ENCODE measurements at regions of chr16 and their contacts with region 1.

Region 1: GRCh38 chr16:79628501-79628975 is 28.0 kb upstream of the MAF start:
- DNase-seq: peak; percentile 91
- H3K4me3 Mint-ChIP-seq: no peak overlapping the region
- H3K27ac Mint-ChIP-seq: peak overlapping the region; percentile 76
- H3K4me1 Mint-ChIP-seq: peaks cover 41% of the 10 kb centered on the region
- H3K27me3 Mint-ChIP-seq: peaks cover 30% of the 10 kb centered on the region

Region 2: DNA sequence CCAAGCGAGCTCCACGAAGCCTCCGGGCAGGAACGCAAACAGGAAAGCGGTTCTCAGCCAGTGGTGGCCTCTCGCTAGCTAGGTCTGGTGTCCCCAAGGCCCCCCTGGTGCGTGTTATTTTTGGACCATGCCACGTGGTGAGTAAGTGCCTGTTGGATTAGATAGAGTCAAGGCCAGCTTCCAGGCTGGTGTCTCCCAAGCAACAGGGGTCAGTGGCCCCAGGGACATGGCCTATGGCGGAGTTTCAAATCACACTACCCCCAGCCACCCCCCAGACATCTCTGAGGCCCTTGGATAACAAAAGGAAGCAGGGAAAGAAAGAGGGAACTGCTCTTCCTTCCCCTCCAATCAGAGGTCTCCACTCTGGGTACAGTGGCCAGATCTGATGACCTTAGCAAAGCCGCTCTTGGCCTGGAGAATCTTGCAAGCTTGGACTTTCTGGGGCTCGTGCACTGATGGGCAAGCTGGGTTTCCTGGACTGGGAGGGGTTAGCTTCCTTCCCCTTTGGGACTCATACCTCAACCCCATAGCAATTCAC is 86.2 kb before region 1 on chr16:
- CTCF ChIA-PET with region 1: no interaction called
- POLR2A ChIA-PET with region 1: no interaction called
- intact Hi-C with region 1: no loop called
- DNase-seq: no peak
- H3K4me3 Mint-ChIP-seq: no peak overlapping the region
- H3K27ac Mint-ChIP-seq: no peak overlapping the region
- H3K4me1 Mint-ChIP-seq: no peaks in the 10 kb centered on the region
- H3K27me3 Mint-ChIP-seq: no peaks in the 10 kb centered on the region

Region 3: GRCh38 chr16:79613009-79613408 is 15.5 kb before region 1 on chr16:
- CTCF ChIA-PET with region 1: interaction called, 4 read pairs
- POLR2A ChIA-PET with region 1: interaction called, 15 read pairs
- intact Hi-C with region 1: loop called (anchors 1 kb)
- DNase-seq: no peak
- H3K4me3 Mint-ChIP-seq: no peak overlapping the region
- H3K27ac Mint-ChIP-seq: peak overlapping the region; percentile 76
- H3K4me1 Mint-ChIP-seq: peaks cover 63% of the 10 kb centered on the region
- H3K27me3 Mint-ChIP-seq: peaks cover 16% of the 10 kb centered on the region

Region 4: DNA sequence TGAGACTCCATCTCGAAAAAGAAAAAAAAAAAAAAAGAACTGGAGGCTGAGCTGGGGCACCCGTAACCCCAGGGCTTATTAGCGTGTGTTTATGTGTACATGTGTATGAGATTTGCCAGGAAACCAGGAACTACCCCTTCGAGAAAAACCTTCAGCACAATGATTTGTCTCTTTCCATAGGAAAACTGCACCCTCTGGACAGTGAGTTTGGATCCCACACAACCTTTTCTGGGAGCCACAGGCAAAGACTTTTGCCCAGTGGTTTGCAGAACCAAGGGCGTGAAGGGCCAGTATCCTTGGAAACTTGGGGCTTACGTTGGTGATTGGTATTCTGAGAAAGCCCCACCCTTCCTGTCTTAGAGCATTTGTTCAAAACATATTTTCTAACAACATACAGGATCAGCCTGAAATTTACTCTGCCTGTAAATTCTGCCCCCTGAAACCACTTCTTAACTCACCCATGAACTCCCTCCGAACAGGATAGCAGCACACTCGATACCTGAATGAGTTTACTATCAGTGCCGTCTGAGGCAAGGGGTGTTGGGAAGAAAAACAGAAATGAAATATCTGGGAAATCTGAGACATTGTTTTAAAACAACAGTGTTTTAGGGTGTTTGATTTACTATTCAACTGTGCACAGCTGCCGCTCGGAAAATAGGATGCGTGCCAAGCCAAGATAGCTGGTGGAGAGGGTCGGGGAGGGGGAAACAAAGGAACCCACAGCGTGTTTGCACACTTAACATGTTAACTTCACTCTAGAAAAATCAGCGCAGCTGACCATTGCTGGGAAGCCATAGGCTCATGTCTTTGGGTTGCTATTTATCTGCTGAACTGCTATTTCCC is 12.2 kb after region 1 on chr16:
- CTCF ChIA-PET with region 1: no interaction called
- POLR2A ChIA-PET with region 1: interaction called, 9 read pairs
- intact Hi-C with region 1: loop called (anchors 1 kb)
- DNase-seq: no peak
- H3K4me3 Mint-ChIP-seq: no peak overlapping the region
- H3K27ac Mint-ChIP-seq: peak overlapping the region; percentile 50
- H3K4me1 Mint-ChIP-seq: peaks cover 39% of the 10 kb centered on the region
- H3K27me3 Mint-ChIP-seq: no peaks in the 10 kb centered on the region

Region 5: DNA sequence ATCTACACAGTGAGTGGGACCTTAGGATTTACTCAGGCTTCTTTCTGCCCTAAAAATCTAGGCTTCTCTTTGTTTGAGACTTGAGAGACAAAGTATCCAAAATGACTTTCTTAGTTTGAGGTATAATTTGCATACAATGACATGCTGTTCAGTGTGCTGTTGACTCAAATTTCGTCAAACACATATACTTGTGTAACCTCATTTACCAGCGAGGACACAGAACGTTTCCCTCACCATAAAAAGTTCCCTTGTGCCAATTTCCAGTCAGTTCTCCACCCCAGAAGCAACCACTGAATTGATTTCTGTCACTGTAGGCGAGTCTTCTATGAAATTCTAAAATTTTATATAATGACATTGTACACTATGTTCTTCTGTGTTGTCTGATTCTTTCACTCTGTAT is 40.0 kb after region 1 on chr16:
- CTCF ChIA-PET with region 1: no interaction called
- POLR2A ChIA-PET with region 1: no interaction called
- intact Hi-C with region 1: loop called (anchors 1 kb)
- DNase-seq: peak; percentile 61
- H3K4me3 Mint-ChIP-seq: no peak overlapping the region
- H3K27ac Mint-ChIP-seq: no peak overlapping the region
- H3K4me1 Mint-ChIP-seq: peaks cover 15% of the 10 kb centered on the region
- H3K27me3 Mint-ChIP-seq: peaks cover 5% of the 10 kb centered on the region

Region 6: GRCh38 chr16:79758615-79759341 is 130.2 kb after region 1 on chr16:
- CTCF ChIA-PET with region 1: no interaction called
- POLR2A ChIA-PET with region 1: no interaction called
- intact Hi-C with region 1: loop called (anchors 1 kb)
- DNase-seq: no peak
- H3K4me3 Mint-ChIP-seq: no peak overlapping the region
- H3K27ac Mint-ChIP-seq: no peak overlapping the region
- H3K4me1 Mint-ChIP-seq: peaks cover 37% of the 10 kb centered on the region
- H3K27me3 Mint-ChIP-seq: peaks cover 4% of the 10 kb centered on the region

Region 7: DNA sequence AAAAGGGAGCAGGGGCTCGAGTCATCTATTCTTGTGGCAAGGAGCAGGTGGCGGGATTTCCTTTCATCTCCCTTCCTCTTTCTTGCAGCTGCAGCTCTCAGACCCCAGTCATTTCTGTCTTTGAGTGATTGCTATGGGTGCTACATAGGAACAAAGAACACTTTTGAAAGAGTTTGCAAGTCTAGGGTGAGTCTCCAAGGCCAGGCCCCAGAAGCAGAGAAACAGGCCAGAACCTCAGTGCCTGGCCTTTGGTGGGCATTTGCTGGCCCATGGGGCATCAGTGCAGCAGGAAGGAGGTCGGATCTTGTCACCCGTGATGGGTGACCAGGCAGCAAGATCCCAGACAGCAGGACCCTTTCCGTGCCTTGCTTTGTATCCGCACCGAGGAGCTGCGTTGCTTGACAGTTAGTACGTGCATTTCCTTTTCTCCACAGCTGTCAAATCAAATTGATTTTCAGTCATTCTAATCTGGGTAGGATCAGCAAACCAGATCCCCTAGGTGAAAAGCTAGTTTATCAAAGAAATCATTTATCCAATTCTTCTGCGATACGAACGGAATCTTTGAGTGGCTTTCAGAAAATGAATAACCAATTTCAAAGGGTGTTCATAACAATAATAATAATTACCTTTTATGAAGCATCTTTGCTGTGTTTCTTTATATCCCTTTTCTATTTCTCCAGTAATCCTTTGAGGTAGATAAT is 216.6 kb after region 1 on chr16:
- CTCF ChIA-PET with region 1: no interaction called
- POLR2A ChIA-PET with region 1: no interaction called
- intact Hi-C with region 1: loop called (anchors 1 kb)
- DNase-seq: peak; percentile 58
- H3K4me3 Mint-ChIP-seq: peak overlapping the region; percentile 45
- H3K27ac Mint-ChIP-seq: peak overlapping the region; percentile 69
- H3K4me1 Mint-ChIP-seq: peaks cover 40% of the 10 kb centered on the region
- H3K27me3 Mint-ChIP-seq: peaks cover 5% of the 10 kb centered on the region

Region 8: GRCh38 chr16:79943736-79944135 is 315.2 kb after region 1 on chr16:
- CTCF ChIA-PET with region 1: no interaction called
- POLR2A ChIA-PET with region 1: no interaction called
- intact Hi-C with region 1: no loop called
- DNase-seq: no peak
- H3K4me3 Mint-ChIP-seq: no peak overlapping the region
- H3K27ac Mint-ChIP-seq: no peak overlapping the region
- H3K4me1 Mint-ChIP-seq: no peaks in the 10 kb centered on the region
- H3K27me3 Mint-ChIP-seq: peaks cover 8% of the 10 kb centered on the region

Region 9: GRCh38 chr16:80027007-80027965 is 398.7 kb after region 1 on chr16:
- CTCF ChIA-PET with region 1: no interaction called
- POLR2A ChIA-PET with region 1: no interaction called
- intact Hi-C with region 1: loop called (anchors 5 kb)
- DNase-seq: peak; percentile 85
- H3K4me3 Mint-ChIP-seq: peak overlapping the region; percentile 10
- H3K27ac Mint-ChIP-seq: peak overlapping the region; percentile 29
- H3K4me1 Mint-ChIP-seq: peaks cover 10% of the 10 kb centered on the region
- H3K27me3 Mint-ChIP-seq: peaks cover 2% of the 10 kb centered on the region

Measured in activated CD4-positive, alpha-beta memory T cell treated with anti-CD3 and anti-CD28 coated beads for 36 hours (primary cell).